Calu3 (cell line): ENCODE measurements at regions of chr5 and their contacts with region 1.

Region 1: DNA sequence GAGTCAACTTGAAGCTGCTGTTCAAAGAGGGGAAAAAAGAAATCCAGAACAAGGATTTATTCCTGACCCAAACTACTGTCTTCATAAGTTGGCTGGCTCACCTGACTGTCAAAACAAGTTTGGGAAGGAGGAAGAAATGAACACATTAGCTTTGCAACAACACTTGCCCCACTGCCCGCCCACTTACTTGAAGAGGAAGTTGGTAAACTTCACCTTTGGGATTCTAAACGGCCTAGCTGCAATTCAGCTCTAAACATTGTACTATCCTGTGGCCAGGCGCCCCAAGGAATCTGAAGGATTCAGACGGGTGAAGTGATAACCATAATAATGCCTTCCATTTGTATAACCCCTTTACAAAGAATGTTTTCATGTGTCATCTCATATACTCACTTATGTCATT is 199.4 kb downstream of the ARRDC3 start:
- DNase-seq: peak; percentile 23
- H3K4me3 Mint-ChIP-seq: no peak overlapping the region
- H3K27ac Mint-ChIP-seq: no peak overlapping the region
- H3K4me1 Mint-ChIP-seq: peaks cover 25% of the 10 kb centered on the region
- H3K27me3 Mint-ChIP-seq: no peaks in the 10 kb centered on the region
- CTCF ChIP-seq: no peak

Region 2: GRCh38 chr5:91219803-91220371 is 36.1 kb after region 1 on chr5:
- CTCF ChIA-PET with region 1: interaction called, 16 read pairs
- intact Hi-C with region 1: no loop called
- DNase-seq: peak; percentile 56
- H3K4me3 Mint-ChIP-seq: no peak overlapping the region
- H3K27ac Mint-ChIP-seq: peak overlapping the region; percentile 51
- H3K4me1 Mint-ChIP-seq: peaks cover 45% of the 10 kb centered on the region
- H3K27me3 Mint-ChIP-seq: no peaks in the 10 kb centered on the region
- CTCF ChIP-seq: peak; percentile 32

Region 3: DNA sequence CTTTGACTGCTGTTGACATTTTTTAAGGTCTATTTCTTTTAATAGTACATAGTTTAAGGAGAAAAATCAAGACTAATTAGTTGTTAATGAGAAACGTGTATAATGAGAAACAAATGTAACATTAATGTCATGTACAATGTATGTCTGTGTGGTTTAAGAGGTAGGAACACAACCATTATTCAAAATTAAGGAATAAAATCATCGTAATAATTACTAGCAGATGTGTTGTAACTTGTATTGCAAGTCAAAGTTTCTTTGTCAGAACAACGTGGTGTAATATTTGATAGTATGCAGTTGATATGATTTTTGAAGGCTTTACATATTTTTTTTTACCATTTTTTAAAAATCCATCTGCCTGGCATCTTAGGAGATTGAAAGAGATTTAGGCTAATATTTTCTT is 319.6 kb after region 1 on chr5:
- CTCF ChIA-PET with region 1: no interaction called
- intact Hi-C with region 1: no loop called
- DNase-seq: no peak
- H3K4me3 Mint-ChIP-seq: no peak overlapping the region
- H3K27ac Mint-ChIP-seq: no peak overlapping the region
- H3K4me1 Mint-ChIP-seq: no peaks in the 10 kb centered on the region
- H3K27me3 Mint-ChIP-seq: no peaks in the 10 kb centered on the region
- CTCF ChIP-seq: no peak

Region 4: DNA sequence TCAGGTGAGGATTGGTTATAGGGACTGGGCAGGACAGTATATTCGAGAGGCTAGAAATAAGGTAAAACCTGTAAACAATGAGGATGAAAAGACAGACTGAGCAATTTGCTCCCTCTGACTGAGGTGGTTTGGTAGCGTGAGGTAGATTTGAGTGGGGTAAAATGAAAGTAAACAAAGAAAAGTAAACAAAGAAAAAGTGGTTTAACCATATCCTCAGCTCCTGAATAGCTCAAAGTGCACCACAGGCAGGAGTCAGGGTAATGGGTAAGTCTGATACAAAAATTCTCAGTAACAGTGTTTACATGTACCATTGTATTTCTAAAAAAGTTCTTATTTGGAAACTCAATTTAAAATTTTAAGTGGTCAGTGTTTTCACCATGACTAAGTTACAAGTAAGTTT is 402.5 kb after region 1 on chr5:
- CTCF ChIA-PET with region 1: no interaction called
- intact Hi-C with region 1: no loop called
- DNase-seq: no peak
- H3K4me3 Mint-ChIP-seq: peak overlapping the region; percentile 4
- H3K27ac Mint-ChIP-seq: no peak overlapping the region
- H3K4me1 Mint-ChIP-seq: no peaks in the 10 kb centered on the region
- H3K27me3 Mint-ChIP-seq: no peaks in the 10 kb centered on the region
- CTCF ChIP-seq: no peak